ENCODE measurements at regions of chrX and their contacts with region 1.

Region 1: DNA sequence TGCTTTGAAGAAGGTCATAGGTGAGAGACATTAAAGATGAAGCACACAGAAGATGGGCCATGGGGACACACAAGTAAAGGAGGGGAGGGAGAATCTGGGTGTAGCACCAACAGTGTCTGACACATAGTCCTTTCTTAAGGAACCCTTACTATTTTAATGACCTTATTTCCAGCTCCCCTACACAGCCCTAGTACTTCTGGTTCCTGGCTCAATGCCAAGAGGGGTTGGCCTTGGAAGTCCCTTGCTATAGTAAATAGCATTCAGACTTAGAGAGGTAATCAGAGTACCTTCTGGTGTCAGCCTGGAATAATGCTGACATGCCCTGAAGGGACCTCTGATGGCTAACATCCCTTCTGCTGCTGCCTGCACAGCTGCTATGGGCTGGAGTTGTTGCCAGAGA is 25.8 kb upstream of the MAGEB2 start:
- DNase-seq: no peak
- ATAC-seq: no peak
- H3K4me3 ChIP-seq: no peak overlapping the region
- H3K27ac ChIP-seq: no peak overlapping the region
- H3K4me1 ChIP-seq: no peaks in the 10 kb centered on the region
- H3K27me3 ChIP-seq: peaks cover 11% of the 10 kb centered on the region
- CTCF ChIP-seq: no peak
- POLR2A ChIP-seq: no peak
- RAD21 ChIP-seq: no peak

Region 2: GRCh38 chrX:28542791-28543190 is 1646.7 kb before region 1 on chrX:
- CTCF ChIA-PET with region 1: no interaction called
- POLR2A ChIA-PET with region 1: no interaction called
- dilution Hi-C with region 1: no loop called
- in situ Hi-C with region 1: no loop called
- intact Hi-C with region 1: no loop called
- DNase-seq: no peak
- ATAC-seq: no peak
- H3K4me3 ChIP-seq: no peak overlapping the region
- H3K27ac ChIP-seq: no peak overlapping the region
- H3K4me1 ChIP-seq: no peaks in the 10 kb centered on the region
- H3K27me3 ChIP-seq: no peaks in the 10 kb centered on the region
- CTCF ChIP-seq: no peak
- POLR2A ChIP-seq: no peak
- RAD21 ChIP-seq: no peak

Region 3: DNA sequence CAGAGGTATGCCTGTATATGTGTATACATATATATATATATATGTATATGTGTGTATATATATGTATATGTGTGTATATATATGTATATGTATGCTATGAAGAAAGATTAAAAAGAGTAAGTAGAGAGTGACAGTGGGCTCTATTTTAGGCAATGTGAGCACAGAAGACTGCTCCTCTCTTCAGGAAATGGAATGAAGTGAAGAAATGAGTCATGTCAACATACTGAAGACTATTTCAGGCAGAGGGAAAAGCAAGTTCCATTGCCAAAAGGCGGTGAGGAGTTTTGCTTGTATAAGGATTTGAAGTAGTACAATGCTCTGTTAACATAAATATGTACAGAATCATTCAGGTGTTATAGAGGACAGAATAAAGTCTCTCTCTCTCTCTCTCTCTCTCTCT is 1655.5 kb after region 1 on chrX:
- CTCF ChIA-PET with region 1: no interaction called
- POLR2A ChIA-PET with region 1: no interaction called
- dilution Hi-C with region 1: no loop called
- in situ Hi-C with region 1: no loop called
- intact Hi-C with region 1: loop called (anchors 5 kb)
- DNase-seq: no peak
- ATAC-seq: no peak
- H3K4me3 ChIP-seq: no peak overlapping the region
- H3K27ac ChIP-seq: no peak overlapping the region
- H3K4me1 ChIP-seq: no peaks in the 10 kb centered on the region
- H3K27me3 ChIP-seq: no peaks in the 10 kb centered on the region
- CTCF ChIP-seq: no peak
- POLR2A ChIP-seq: no peak
- RAD21 ChIP-seq: no peak